ENCODE measurements at regions of chr14 and their contacts with region 1.

Region 1: DNA sequence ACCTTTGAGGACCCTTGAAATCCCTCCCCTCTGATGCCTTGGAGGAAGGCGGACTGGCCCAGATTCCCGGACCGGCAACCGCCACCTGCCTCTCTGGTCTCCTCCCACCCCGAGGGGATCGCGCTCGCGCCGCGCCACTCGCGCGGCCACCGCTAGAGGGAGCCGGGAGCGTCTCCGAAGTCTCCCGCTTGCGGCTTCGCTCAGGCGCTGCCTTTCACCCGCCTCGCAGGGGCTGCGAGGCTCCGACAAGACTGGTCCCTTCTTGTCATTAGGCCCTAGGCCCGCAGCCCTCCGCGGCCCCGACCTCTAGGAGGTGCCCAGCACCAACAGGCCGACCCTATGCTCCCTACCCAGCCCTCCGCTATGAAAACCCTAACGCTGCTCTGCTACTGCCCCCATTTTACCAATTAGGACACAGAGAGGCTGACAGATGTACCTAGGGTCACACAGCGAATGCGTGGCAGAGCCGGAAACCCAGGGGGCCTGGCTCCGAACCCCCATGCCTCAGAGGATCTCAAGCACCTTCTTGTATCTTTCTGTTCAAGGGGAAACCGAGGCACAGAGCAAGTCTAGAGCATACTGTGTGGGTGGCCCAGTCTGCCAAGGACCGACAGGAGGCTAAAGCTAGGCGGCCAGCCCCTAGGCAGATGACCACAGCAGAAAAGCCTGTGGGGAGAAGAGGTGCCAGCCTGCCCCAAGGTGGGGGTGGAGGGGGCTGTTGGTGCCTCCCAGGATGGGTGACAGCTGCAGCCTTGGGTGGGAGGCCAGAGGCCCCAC is 21.4 kb upstream of the VSX2 start:
- DNase-seq: peak; percentile 94
- ATAC-seq: peak; percentile 92
- H3K4me3 Mint-ChIP-seq: peak overlapping the region; percentile 20; the same call in 1 of the 2 replicates
- H3K27ac Mint-ChIP-seq: no peak overlapping the region
- H3K4me1 Mint-ChIP-seq: no peaks in the 10 kb centered on the region; the same call in 1 of the 2 replicates
- H3K27me3 Mint-ChIP-seq: peaks cover 26% of the 10 kb centered on the region
- CTCF ChIP-seq: peak; percentile 94

Region 2: GRCh38 chr14:74249433-74250375 is 31.8 kb after region 1 on chr14:
- CTCF ChIA-PET with region 1: interaction called, 21 read pairs
- POLR2A ChIA-PET with region 1: interaction called, 3 read pairs
- DNase-seq: no peak
- ATAC-seq: no peak
- H3K4me3 Mint-ChIP-seq: no peak overlapping the region
- H3K27ac Mint-ChIP-seq: no peak overlapping the region
- H3K4me1 Mint-ChIP-seq: peaks cover 20% of the 10 kb centered on the region
- H3K27me3 Mint-ChIP-seq: peaks cover 34% of the 10 kb centered on the region
- CTCF ChIP-seq: no peak

Measured in WTC11 (cell line).